Activated T-helper 1 cell treated with anti-CD3 and anti-CD28 coated beads, Interleukin-12 subunit alpha, Interleukin-12 subunit beta, Interleukin-2, Interleukin-4 antibody, amounts not matched to agents 30 ng/mL and 10 ng/mL and 1 ng/mL, durations not matched to agents 14 hours and 24 hours and 36 hours (primary cell): ENCODE measurements at regions of chr17 and their contacts with region 1.

Region 1: GRCh38 chr17:75827252-75828115 is 16.7 kb downstream of the UNC13D start:
- DNase-seq: peak; percentile 56
- H3K4me3 Mint-ChIP-seq: peak overlapping the region; percentile 7
- H3K27ac Mint-ChIP-seq: peak overlapping the region; percentile 89
- H3K4me1 Mint-ChIP-seq: peaks cover 12% of the 10 kb centered on the region
- H3K27me3 Mint-ChIP-seq: no peaks in the 10 kb centered on the region

Region 2: DNA sequence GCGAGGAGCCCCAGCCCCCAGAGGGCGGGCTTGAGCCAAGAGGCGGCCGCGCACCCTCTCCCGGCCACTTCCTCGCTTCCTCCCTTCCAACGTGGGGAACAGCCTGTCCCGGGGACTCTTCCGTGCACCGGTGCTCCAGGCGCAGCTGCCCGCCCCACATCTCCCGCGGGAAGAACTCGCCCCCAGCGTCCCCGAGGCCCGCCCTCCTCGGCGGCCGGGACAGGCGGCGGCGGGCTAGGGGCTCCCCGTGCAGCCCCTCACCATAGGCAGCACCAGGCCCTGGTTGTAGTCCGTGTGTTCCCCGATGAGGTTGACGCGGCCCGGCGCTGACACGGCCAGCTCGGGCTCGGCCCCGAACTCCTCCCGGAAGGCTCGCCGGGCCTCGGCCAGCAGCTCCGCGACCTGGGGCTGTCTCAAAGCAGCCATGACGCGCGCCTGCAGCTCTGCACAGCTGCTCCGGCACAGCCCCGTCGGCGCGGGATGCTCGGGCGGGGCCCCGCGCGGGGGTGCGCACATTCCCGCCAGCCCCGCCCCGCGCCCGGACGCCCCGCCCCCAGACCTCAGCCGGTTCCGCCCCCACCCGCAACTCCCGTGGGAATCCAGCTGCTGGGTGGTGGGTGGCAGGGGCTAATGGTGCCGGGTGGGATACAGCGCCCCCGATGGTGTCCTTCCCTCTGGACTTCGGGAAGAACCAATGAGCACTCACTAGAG is 62.6 kb before region 1 on chr17 and contains the start of gene GALK1:
- intact Hi-C with region 1: loop called (anchors 2 kb)
- DNase-seq: peak; percentile 73
- H3K4me3 Mint-ChIP-seq: peak within 1 kb of the TSS; percentile 84
- H3K27ac Mint-ChIP-seq: peak within 1 kb of the TSS; percentile 72
- H3K4me1 Mint-ChIP-seq: peaks cover 6% of the 10 kb centered on the region
- H3K27me3 Mint-ChIP-seq: no peaks in the 10 kb centered on the region
- total RNA-seq, gene GALK1: 48.0 and 49.3 TPM in 2 replicates

Region 3: GRCh38 chr17:75784473-75785015 is 42.9 kb before region 1 on chr17 and contains the start of gene UNK:
- intact Hi-C with region 1: loop called (anchors 5 kb)
- DNase-seq: peak; percentile 94
- H3K4me3 Mint-ChIP-seq: peak within 1 kb of the TSS; percentile 92
- H3K27ac Mint-ChIP-seq: peak within 1 kb of the TSS; percentile 99
- H3K4me1 Mint-ChIP-seq: peaks cover 47% of the 10 kb centered on the region
- H3K27me3 Mint-ChIP-seq: peaks cover 2% of the 10 kb centered on the region
- total RNA-seq, gene UNK: 26.0 and 26.9 TPM in 2 replicates

Region 4: DNA sequence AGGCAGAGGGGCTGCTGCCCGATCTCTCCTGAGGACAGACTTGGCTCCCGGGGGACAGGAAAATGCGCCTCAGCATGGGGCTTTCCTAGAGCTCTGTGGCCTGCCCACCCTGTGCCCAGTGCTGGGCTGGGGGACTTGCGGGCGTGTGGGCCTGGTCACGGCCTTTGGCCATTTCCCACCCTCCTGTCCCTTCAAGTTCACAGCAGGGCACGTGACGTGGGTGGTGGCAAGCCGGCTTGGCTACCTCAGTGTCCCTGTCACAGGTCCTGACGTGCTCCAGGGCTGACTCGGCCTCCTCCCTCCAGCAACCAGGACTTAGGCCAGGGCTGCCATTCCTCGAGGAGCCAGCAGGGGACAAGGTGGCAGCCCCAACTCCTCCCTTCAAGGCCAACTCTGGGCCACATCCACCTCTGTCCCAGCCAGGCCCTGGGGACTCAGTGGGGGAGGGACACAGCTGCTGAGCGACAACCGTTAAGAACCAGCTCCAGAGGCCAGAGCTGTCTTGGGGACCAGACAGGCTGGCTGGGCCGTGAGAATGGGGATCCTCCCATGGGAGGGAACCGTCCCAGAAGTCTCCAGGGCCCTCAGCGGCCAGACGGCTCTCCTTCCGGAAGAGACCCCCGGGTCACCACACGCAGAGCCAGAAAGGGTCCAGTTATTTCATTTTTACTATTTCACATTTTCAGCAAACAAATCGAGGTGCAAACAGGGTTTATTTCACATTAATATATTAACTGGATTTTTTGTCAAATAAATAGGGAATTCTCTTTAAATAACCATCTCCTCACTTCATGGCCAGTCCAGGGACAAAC is 17.8 kb after region 1 on chr17:
- intact Hi-C with region 1: loop called (anchors 2 kb)
- DNase-seq: no peak
- H3K4me3 Mint-ChIP-seq: peak overlapping the region; percentile 66
- H3K27ac Mint-ChIP-seq: peak overlapping the region; percentile 48
- H3K4me1 Mint-ChIP-seq: peaks cover 16% of the 10 kb centered on the region
- H3K27me3 Mint-ChIP-seq: no peaks in the 10 kb centered on the region

Region 5: GRCh38 chr17:75877752-75878173 is 50.3 kb after region 1 on chr17:
- intact Hi-C with region 1: no loop called
- DNase-seq: peak; percentile 71
- H3K4me3 Mint-ChIP-seq: peak overlapping the region; percentile 93
- H3K27ac Mint-ChIP-seq: peak overlapping the region; percentile 95
- H3K4me1 Mint-ChIP-seq: peaks cover 32% of the 10 kb centered on the region
- H3K27me3 Mint-ChIP-seq: peaks cover 16% of the 10 kb centered on the region